ENCODE measurements at regions of chr2 and their contacts with region 1.

Region 1: DNA sequence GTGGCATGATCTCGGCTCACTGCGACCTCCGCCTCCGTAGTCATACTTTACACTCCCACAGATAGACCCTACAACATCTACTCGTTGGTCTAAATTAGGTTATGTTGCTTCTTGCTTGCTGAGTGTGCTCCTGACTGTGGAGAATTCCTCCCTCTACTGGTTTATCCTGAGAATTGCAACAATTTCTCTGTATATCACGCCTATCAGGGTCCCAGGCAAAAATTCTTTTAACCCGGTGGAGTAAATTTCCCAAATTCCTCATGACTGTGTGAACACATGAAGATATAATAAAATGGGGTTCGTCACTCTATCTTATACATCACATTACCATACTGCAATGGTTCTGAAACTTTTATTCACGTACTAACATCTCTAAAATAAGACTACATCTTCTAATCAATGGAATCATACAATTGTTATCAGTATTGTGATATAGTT is 156.7 kb downstream of the EVA1A start:
- DNase-seq: peak; percentile 59
- ATAC-seq: peak; percentile 94
- H3K4me3 ChIP-seq: no peak overlapping the region
- H3K27ac ChIP-seq: no peak overlapping the region
- H3K4me1 ChIP-seq: no peaks in the 10 kb centered on the region
- H3K27me3 ChIP-seq: peaks cover 14% of the 10 kb centered on the region
- CTCF ChIP-seq: peak; percentile 85
- POLR2A ChIP-seq: no peak
- RAD21 ChIP-seq: peak; percentile 93

Region 2: DNA sequence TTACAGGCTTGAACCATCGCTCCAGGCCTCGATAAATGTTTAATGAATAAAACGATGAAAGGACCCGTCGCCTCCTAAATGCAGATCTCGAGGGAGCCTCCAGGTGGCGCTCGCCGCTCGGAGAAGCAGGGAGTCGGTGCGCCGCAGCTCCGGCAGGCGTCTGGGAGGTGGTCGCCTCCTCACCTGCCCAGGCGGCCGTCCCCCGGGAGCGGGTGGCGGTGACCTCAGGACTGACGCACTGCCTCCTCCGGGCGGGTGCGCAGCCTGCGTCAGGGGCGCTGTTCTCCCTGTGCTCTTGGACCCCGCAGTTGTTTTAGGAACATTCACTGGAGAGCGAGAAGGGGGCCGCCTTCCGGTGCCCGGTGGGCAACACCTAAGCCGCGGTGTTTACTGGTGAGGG is 484.2 kb before region 1 on chr2:
- CTCF ChIA-PET with region 1: no interaction called
- POLR2A ChIA-PET with region 1: no interaction called
- dilution Hi-C with region 1: no loop called
- in situ Hi-C with region 1: loop called (anchors 10 kb)
- intact Hi-C with region 1: loop called (anchors 1 kb)
- DNase-seq: peak; percentile 48
- ATAC-seq: peak; percentile 58
- H3K4me3 ChIP-seq: peak overlapping the region; percentile 42
- H3K27ac ChIP-seq: no peak overlapping the region
- H3K4me1 ChIP-seq: peaks cover 17% of the 10 kb centered on the region
- H3K27me3 ChIP-seq: no peaks in the 10 kb centered on the region
- CTCF ChIP-seq: peak; percentile 83
- POLR2A ChIP-seq: no peak
- RAD21 ChIP-seq: peak; percentile 88

Region 3: GRCh38 chr2:75064691-75065396 is 339.2 kb before region 1 on chr2:
- CTCF ChIA-PET with region 1: interaction called, 3 read pairs
- POLR2A ChIA-PET with region 1: no interaction called
- dilution Hi-C with region 1: no loop called
- in situ Hi-C with region 1: no loop called
- intact Hi-C with region 1: loop called (anchors 1 kb)
- DNase-seq: peak; percentile 58
- ATAC-seq: peak; percentile 74
- H3K4me3 ChIP-seq: no peak overlapping the region; the same call in 1 of the 2 replicates
- H3K27ac ChIP-seq: no peak overlapping the region; the same call in 1 of the 2 replicates
- H3K4me1 ChIP-seq: peaks cover 4% of the 10 kb centered on the region; the same call in 1 of the 2 replicates
- H3K27me3 ChIP-seq: no peaks in the 10 kb centered on the region
- CTCF ChIP-seq: peak; percentile 82
- POLR2A ChIP-seq: no peak
- RAD21 ChIP-seq: peak; percentile 66

Region 4: DNA sequence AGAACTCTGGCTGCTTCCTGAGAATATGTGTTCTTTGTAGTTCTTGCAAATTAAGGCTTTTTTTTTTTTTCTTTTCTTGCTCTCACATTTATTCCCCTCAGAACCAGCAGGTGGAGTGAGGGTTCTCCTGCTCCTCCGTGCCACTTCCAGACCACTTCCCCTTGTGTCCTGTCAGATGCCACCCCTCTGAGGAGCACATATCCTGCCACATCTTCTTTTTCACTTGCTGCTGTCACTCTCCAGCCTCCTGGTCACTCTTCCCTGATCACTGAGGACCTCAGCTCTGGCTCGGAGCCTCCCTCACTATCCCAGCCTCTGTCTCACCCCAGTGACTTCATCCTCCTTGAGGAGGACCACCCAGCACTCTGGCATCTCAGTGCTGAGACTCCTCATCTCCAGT is 305.2 kb before region 1 on chr2:
- CTCF ChIA-PET with region 1: interaction called, 3 read pairs
- POLR2A ChIA-PET with region 1: no interaction called
- dilution Hi-C with region 1: no loop called
- in situ Hi-C with region 1: no loop called
- intact Hi-C with region 1: loop called (anchors 10 kb)
- DNase-seq: peak; percentile 31
- ATAC-seq: no peak
- H3K4me3 ChIP-seq: no peak overlapping the region
- H3K27ac ChIP-seq: no peak overlapping the region
- H3K4me1 ChIP-seq: peaks cover 5% of the 10 kb centered on the region
- H3K27me3 ChIP-seq: peaks cover 2% of the 10 kb centered on the region; the same call in 1 of the 2 replicates
- CTCF ChIP-seq: peak; percentile 48
- POLR2A ChIP-seq: no peak
- RAD21 ChIP-seq: peak; percentile 41; the same call in 1 of the 2 replicates

Region 5: GRCh38 chr2:75157430-75157829 is 246.6 kb before region 1 on chr2:
- CTCF ChIA-PET with region 1: no interaction called
- POLR2A ChIA-PET with region 1: no interaction called
- dilution Hi-C with region 1: no loop called
- in situ Hi-C with region 1: no loop called
- intact Hi-C with region 1: loop called (anchors 5 kb)
- DNase-seq: no peak
- ATAC-seq: peak; percentile 64; the same call in 1 of the 2 replicates
- H3K4me3 ChIP-seq: no peak overlapping the region
- H3K27ac ChIP-seq: no peak overlapping the region
- H3K4me1 ChIP-seq: no peaks in the 10 kb centered on the region
- H3K27me3 ChIP-seq: no peaks in the 10 kb centered on the region; the same call in 1 of the 2 replicates
- CTCF ChIP-seq: peak; percentile 24; the same call in 1 of the 2 replicates
- POLR2A ChIP-seq: no peak
- RAD21 ChIP-seq: peak; percentile 35

Region 6: DNA sequence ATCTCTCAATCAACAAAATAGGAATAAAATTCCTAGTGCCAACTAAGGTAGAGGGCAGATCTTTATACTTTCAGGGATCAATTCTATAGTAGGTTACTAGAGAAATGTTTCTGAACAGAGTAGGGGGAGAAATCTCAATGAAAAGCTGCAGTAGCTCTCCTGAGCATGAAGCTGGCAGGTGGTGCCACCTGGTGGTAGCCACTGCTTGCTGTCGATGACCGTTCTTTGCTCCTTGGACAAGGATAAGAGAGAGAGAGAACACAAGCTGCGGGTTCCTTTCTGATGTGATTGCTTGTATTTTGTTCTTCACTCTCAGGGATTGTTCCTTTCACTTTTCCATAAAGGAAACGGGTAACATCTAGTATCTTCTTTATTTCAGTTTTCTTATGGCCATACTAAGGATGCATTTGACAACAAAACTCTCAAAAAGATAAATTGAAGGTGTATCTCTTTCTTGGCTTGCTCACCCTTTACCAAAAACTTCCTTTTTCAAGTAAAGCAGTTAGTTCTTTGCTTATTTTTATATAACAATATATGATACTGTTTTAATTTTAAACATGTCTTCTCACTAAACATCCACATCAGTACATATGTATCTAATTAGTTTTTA is 224.0 kb after region 1 on chr2:
- CTCF ChIA-PET with region 1: no interaction called
- POLR2A ChIA-PET with region 1: no interaction called
- dilution Hi-C with region 1: no loop called
- in situ Hi-C with region 1: no loop called
- intact Hi-C with region 1: loop called (anchors 1 kb)
- DNase-seq: peak; percentile 80
- ATAC-seq: peak; percentile 97
- H3K4me3 ChIP-seq: no peak overlapping the region
- H3K27ac ChIP-seq: no peak overlapping the region
- H3K4me1 ChIP-seq: no peaks in the 10 kb centered on the region
- H3K27me3 ChIP-seq: peaks cover 18% of the 10 kb centered on the region
- CTCF ChIP-seq: peak; percentile 90
- POLR2A ChIP-seq: no peak
- RAD21 ChIP-seq: peak; percentile 93